Mammary epithelial cell (primary cell): ENCODE measurements at regions of chr19 and their contacts with region 1.

Region 1: GRCh38 chr19:48255376-48256303 is at the start of gene CARD8:
- DNase-seq: peak; percentile 86
- H3K4me3 ChIP-seq: peak within 1 kb of the TSS; percentile 56 to 86 (median 77)
- H3K27ac ChIP-seq: peak within 1 kb of the TSS; percentile 97
- H3K4me1 ChIP-seq: peaks cover 4% of the 10 kb centered on the region
- H3K27me3 ChIP-seq: no peaks in the 10 kb centered on the region
- CTCF ChIP-seq: no peak
- total RNA-seq, gene CARD8: 10.5 to 14.2 TPM

Region 2: DNA sequence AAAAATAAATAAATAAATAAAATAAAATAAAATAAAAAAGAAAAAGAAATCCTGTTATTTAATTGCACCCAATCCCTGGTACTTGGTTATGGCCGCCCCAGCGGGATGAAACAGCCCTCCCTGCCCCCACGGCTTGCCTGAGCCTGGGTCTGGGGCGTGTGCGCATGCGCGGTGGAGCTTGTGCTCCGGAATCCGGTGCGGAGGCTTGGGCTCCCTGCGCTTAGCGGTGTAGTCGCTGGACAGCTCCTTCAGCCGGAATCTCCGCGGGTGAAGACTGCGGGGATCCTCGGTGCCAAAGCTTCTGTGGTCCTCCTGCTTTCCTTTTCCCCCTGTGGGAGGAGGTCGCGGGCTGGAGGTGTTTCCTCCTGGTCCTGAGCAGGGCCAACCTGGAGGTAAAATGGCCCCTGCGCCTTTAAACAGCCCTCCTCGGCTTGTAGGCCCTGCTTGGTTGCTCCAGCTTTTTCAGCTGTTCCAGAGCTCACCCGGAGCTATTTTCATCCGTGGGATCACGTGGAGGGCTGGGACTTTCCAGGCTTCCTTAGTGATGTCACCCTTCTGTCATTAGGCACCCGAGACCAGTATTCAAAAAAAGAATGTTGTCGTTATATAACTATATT is 145.2 kb before region 1 on chr19 and contains the start of gene PLA2G4C:
- CTCF ChIA-PET with region 1: no interaction called
- dilution Hi-C with region 1: no loop called
- in situ Hi-C with region 1: no loop called
- intact Hi-C with region 1: loop called (anchors 1 kb)
- DNase-seq: peak; percentile 85
- H3K4me3 ChIP-seq: peak within 1 kb of the TSS; percentile 42 to 44 (median 44)
- H3K27ac ChIP-seq: peak within 1 kb of the TSS; percentile 63
- H3K4me1 ChIP-seq: peaks cover 11% of the 10 kb centered on the region
- H3K27me3 ChIP-seq: no peaks in the 10 kb centered on the region
- CTCF ChIP-seq: no peak
- total RNA-seq, gene PLA2G4C: 2.7 to 3.2 TPM

Region 3: DNA sequence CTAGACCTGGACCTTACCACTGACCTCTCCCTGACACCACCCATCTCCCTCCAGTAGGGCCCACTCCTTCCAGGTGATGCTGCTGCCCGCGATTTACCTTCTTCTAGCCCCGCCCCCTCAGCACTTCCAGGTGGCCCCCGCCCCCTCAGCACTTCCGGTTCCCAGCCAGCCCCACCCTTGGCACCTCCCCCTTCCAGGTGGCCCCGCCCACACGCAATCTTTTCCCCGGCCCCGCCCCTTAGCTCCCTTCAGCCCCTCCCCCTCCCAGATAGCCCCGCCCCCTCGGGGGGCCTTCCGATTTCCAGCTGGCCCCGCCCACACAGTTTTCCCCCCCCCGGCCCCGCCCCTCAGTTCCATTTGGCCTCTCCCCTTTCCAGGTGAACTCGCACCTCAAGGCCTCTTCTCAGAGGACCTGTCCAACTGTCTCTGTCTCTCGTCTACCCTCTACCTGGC is 86.0 kb before region 1 on chr19:
- CTCF ChIA-PET with region 1: no interaction called
- dilution Hi-C with region 1: no loop called
- in situ Hi-C with region 1: no loop called
- intact Hi-C with region 1: loop called (anchors 1 kb)
- DNase-seq: peak; percentile 66
- H3K4me3 ChIP-seq: peak overlapping the region; percentile 93 to 100 (median 97)
- H3K27ac ChIP-seq: peak overlapping the region; percentile 71
- H3K4me1 ChIP-seq: peaks cover 10% of the 10 kb centered on the region
- H3K27me3 ChIP-seq: no peaks in the 10 kb centered on the region
- CTCF ChIP-seq: no peak

Region 4: GRCh38 chr19:48230555-48231129 is 25.0 kb before region 1 on chr19:
- CTCF ChIA-PET with region 1: no interaction called
- dilution Hi-C with region 1: no loop called
- in situ Hi-C with region 1: no loop called
- intact Hi-C with region 1: no loop called
- DNase-seq: no peak
- H3K4me3 ChIP-seq: no peak overlapping the region
- H3K27ac ChIP-seq: no peak overlapping the region
- H3K4me1 ChIP-seq: no peaks in the 10 kb centered on the region
- H3K27me3 ChIP-seq: no peaks in the 10 kb centered on the region
- CTCF ChIP-seq: no peak

Region 5: DNA sequence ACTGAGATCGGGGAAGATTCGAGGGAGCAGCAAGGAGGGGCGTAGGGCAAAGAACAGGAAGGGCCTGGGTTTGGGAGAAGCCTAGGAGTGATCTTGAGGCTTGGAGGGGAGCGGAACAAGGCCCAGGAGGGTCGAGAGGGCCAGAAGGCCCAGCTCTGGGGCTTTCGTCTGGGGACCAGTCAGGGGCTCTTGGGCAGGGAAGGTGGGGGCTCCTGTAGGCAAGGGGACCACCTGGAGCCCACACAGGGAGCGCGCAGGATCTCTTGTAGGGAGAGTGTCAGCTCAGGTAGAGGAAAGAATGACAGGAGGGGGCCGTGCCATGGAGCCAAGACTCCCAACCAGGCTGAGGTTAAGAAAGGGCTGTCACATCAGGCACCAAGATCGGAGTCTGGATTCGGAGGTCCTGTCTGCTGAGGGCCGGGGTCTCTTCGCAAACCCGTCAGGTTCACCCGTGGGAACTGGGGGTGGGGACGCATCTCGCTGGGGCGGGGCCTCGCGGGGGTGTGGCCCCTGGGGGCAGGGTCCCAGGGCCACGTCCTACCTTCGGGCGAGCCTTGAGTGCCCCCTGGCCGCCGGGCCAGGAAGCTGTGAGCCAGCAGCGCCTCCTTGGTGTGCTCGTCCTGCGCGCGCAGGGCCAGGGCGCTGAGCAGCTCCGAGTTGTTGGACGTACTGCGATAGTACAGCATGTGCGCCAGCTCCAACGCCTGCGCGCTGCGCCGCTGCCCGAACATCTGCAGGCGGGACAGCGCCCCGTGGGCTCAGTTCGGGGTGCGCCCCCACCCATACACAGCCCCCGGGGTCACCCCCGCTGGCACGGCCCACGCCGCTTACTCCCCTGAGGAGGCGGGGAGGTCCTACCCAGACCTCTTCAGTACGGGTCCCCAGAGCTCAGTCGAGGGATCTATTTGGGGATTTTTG is 78.1 kb after region 1 on chr19:
- CTCF ChIA-PET with region 1: no interaction called
- dilution Hi-C with region 1: loop called (anchors 5 kb)
- in situ Hi-C with region 1: no loop called
- intact Hi-C with region 1: no loop called
- DNase-seq: peak; percentile 87
- H3K4me3 ChIP-seq: peak overlapping the region; percentile 15 to 48 (median 44)
- H3K27ac ChIP-seq: peak overlapping the region; percentile 45
- H3K4me1 ChIP-seq: peaks cover 35% of the 10 kb centered on the region
- H3K27me3 ChIP-seq: no peaks in the 10 kb centered on the region
- CTCF ChIP-seq: peak; percentile 54 to 89